ENCODE measurements at regions of chr5 and their contacts with region 1.

Region 1: GRCh38 chr5:138213161-138214029 is at the start of gene CDC23:
- DNase-seq: peak; percentile 95
- ATAC-seq: peak; percentile 98
- H3K4me3 Mint-ChIP-seq: peak within 1 kb of the TSS; percentile 99
- H3K27ac Mint-ChIP-seq: peak within 1 kb of the TSS; percentile 99
- H3K4me1 Mint-ChIP-seq: peaks cover 5% of the 10 kb centered on the region; the same call in 1 of the 2 replicates
- H3K27me3 Mint-ChIP-seq: no peaks in the 10 kb centered on the region; the same call in none of the 2 replicates
- CTCF ChIP-seq: no peak
- total RNA-seq, gene CDC23: 43.8 to 45.3 TPM (median 44.5 TPM) in 3 replicates

Region 2: GRCh38 chr5:138178516-138179276 is 34.7 kb before region 1 on chr5 and contains the starts of genes BRD8 and KIF20A:
- CTCF ChIA-PET with region 1: no interaction called
- POLR2A ChIA-PET with region 1: interaction called, 12 read pairs
- DNase-seq: peak; percentile 96
- ATAC-seq: peak; percentile 92
- H3K4me3 Mint-ChIP-seq: no peak within 1 kb of the TSS
- H3K27ac Mint-ChIP-seq: peak within 1 kb of the TSS; percentile 63; the same call in 1 of the 2 replicates
- H3K4me1 Mint-ChIP-seq: peaks cover 13% of the 10 kb centered on the region
- H3K27me3 Mint-ChIP-seq: no peaks in the 10 kb centered on the region
- CTCF ChIP-seq: no peak
- total RNA-seq, gene BRD8: 59.6 to 73.4 TPM (median 61.4 TPM) in 3 replicates
- total RNA-seq, gene KIF20A: 66.9 to 81.9 TPM (median 68.0 TPM) in 3 replicates

Region 3: GRCh38 chr5:138282920-138283742 is 69.7 kb after region 1 on chr5:
- CTCF ChIA-PET with region 1: interaction called, 17 read pairs
- POLR2A ChIA-PET with region 1: interaction called, 4 read pairs
- DNase-seq: peak; percentile 57
- ATAC-seq: peak; percentile 95
- H3K4me3 Mint-ChIP-seq: no peak overlapping the region
- H3K27ac Mint-ChIP-seq: no peak overlapping the region
- H3K4me1 Mint-ChIP-seq: no peaks in the 10 kb centered on the region
- H3K27me3 Mint-ChIP-seq: no peaks in the 10 kb centered on the region
- CTCF ChIP-seq: no peak

Region 4: GRCh38 chr5:138331449-138332368 is 118.3 kb after region 1 on chr5 and contains the start of gene CDC25C:
- CTCF ChIA-PET with region 1: no interaction called
- POLR2A ChIA-PET with region 1: interaction called, 12 read pairs
- DNase-seq: peak; percentile 98
- ATAC-seq: peak; percentile 99
- H3K4me3 Mint-ChIP-seq: peak within 1 kb of the TSS; percentile 91
- H3K27ac Mint-ChIP-seq: peak within 1 kb of the TSS; percentile 97
- H3K4me1 Mint-ChIP-seq: peaks cover 18% of the 10 kb centered on the region
- H3K27me3 Mint-ChIP-seq: no peaks in the 10 kb centered on the region
- CTCF ChIP-seq: no peak
- total RNA-seq, gene CDC25C: 15.0 to 18.8 TPM (median 16.1 TPM) in 3 replicates